Psoas muscle (tissue), 8 donors: ENCODE measurements at regions of chr12 and their contacts with region 1.

Region 1: GRCh38 chr12:75390899-75391538 is at the start of gene GLIPR1L2:
- DNase-seq: peak; percentile 95 to 98
- ATAC-seq: peak; percentile 98 to 99 (median 99)
- H3K4me3 ChIP-seq: peak within 1 kb of the TSS; percentile 83
- H3K27ac ChIP-seq: peak within 1 kb of the TSS; percentile 94
- H3K4me1 ChIP-seq: peaks cover 20% of the 10 kb centered on the region
- H3K27me3 ChIP-seq: no peaks in the 10 kb centered on the region
- CTCF ChIP-seq: peak; percentile 80
- total RNA-seq, gene GLIPR1L2: 0.54 to 1.5 (median 1.3) TPM in 3 of 4 donors, not detected in the other

Region 2: DNA sequence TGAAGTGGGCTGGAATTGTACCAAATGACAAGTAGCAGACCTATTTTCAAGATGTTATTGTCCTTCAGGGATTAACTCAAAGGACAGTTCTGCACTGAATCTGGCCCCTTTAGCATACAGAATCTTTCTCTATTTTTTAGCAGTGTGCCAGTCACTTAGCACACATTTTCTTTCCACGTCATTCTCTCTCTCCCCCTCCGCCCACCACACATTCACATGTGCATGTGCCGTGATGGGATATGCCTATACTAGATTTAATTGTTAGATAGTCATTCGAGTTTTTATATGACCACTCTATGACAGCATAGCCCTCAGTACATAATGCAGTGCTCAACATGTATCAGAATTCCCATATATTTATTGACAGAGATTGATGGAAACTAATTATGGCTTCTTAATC is 310.4 kb before region 1 on chr12:
- intact Hi-C with region 1: no loop called
- DNase-seq: no peak
- ATAC-seq: no peak
- H3K4me3 ChIP-seq: no peak overlapping the region
- H3K27ac ChIP-seq: no peak overlapping the region
- H3K4me1 ChIP-seq: no peaks in the 10 kb centered on the region
- H3K27me3 ChIP-seq: no peaks in the 10 kb centered on the region
- CTCF ChIP-seq: no peak

Region 3: GRCh38 chr12:75334384-75335030 is 56.5 kb before region 1 on chr12 and contains the start of gene GLIPR1L1:
- intact Hi-C with region 1: loop called in 1 of 2 experiments (anchors 2 kb)
- DNase-seq: peak; percentile 79 to 81
- ATAC-seq: peak; percentile 75 to 81 (median 78)
- H3K4me3 ChIP-seq: peak within 1 kb of the TSS; percentile 51
- H3K27ac ChIP-seq: no peak within 1 kb of the TSS
- H3K4me1 ChIP-seq: peaks cover 3% of the 10 kb centered on the region
- H3K27me3 ChIP-seq: no peaks in the 10 kb centered on the region
- CTCF ChIP-seq: peak; percentile 91
- total RNA-seq, gene GLIPR1L1: not detected

Region 4: GRCh38 chr12:75511116-75512048 is 120.4 kb after region 1 on chr12 and contains the start of gene KRR1:
- intact Hi-C with region 1: loop called in 1 of 2 experiments (anchors 2 kb)
- DNase-seq: peak; percentile 89 to 94
- ATAC-seq: peak; percentile 99 to 100 (median 100)
- H3K4me3 ChIP-seq: peak within 1 kb of the TSS; percentile 91
- H3K27ac ChIP-seq: peak within 1 kb of the TSS; percentile 84
- H3K4me1 ChIP-seq: peaks cover 24% of the 10 kb centered on the region
- H3K27me3 ChIP-seq: no peaks in the 10 kb centered on the region
- CTCF ChIP-seq: no peak
- total RNA-seq, gene KRR1: 43.1 to 64.9 (median 50.9) TPM

Region 5: DNA sequence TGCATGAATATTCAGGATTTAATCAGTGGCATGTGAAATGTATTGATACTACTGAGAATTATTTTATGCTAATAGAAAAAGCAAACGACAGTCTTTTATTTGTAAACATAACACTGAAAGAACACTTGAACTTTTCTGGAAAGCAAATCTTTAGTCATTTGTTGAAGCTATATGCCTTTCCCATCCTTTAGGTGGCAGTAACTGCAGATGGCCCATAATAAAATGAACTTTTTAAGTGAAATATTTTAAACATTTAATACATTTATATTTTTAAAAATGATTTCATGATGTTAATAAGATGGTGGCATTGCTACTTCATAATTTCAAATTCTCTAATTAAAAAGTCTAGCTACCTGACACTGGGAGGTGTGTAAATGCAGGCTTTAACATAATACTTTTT is 134.2 kb after region 1 on chr12:
- intact Hi-C with region 1: no loop called
- DNase-seq: no peak
- ATAC-seq: no peak
- H3K4me3 ChIP-seq: no peak overlapping the region
- H3K27ac ChIP-seq: no peak overlapping the region
- H3K4me1 ChIP-seq: no peaks in the 10 kb centered on the region
- H3K27me3 ChIP-seq: no peaks in the 10 kb centered on the region
- CTCF ChIP-seq: no peak

Region 6: GRCh38 chr12:75684678-75685601 is 293.9 kb after region 1 on chr12:
- intact Hi-C with region 1: no loop called
- DNase-seq: no peak
- ATAC-seq: no peak
- H3K4me3 ChIP-seq: no peak overlapping the region
- H3K27ac ChIP-seq: no peak overlapping the region
- H3K4me1 ChIP-seq: no peaks in the 10 kb centered on the region
- H3K27me3 ChIP-seq: no peaks in the 10 kb centered on the region
- CTCF ChIP-seq: no peak